B cell (primary cell): ENCODE measurements at regions of chrX and their contacts with region 1.

Region 1: DNA sequence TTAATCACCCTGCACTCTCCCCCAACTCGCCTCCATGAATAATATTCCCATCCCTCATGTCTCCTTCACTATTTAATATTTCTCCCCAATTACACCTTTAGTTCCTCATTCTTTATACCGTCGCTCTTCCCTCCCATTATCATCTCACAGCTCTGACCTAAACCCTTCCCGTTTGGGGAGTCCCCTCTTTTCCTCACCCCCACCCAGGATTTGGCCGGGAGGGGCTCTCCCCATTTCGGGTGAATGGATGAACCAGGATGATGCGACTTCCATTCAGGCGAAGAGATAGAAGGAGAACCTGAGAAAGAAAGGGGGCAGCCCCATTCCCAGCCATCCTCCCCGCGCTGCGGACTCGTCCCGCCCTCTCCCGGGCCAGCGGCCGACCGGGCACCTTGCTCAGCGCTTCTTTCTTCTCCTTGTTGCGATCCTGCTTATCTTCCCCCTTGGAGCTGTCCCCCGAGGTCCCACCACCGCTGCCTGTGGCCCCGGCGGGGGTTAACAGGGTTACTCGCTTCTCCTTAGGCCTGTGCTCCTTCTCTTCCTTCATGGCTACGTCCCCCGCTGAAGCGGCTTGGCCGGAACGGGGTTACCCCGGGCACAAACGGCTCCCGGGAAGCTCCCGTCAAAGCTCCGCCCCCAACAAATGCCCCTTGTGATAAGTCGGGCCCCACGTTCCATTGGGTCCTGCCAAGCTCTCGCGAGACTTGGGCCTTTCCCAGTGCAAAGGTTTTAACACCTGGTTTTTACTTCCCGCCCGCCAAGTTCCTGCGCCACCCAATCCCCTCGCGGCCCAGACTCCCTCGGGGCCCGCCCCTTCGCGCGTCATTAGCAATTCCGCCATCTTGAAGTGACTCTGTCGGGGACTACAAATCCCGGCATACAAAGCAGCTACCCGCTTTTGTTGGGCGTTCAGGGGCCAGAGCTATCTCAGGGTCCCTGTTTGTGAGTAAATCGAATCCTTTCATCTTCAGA is at the start of gene UPF3B:
- DNase-seq: peak; percentile 95
- ATAC-seq: peak; percentile 96
- H3K4me3 ChIP-seq: peak within 1 kb of the TSS; percentile 69 to 93 (median 84)
- H3K4me3 Mint-ChIP-seq: peak within 1 kb of the TSS; percentile 98
- H3K27ac ChIP-seq: peak within 1 kb of the TSS; percentile 92 to 93
- H3K27ac Mint-ChIP-seq: peak within 1 kb of the TSS; percentile 97
- H3K4me1 ChIP-seq: peaks cover 0 to 11% of the 10 kb centered on the region in 2 donors
- H3K4me1 Mint-ChIP-seq: peaks cover 15% of the 10 kb centered on the region
- H3K27me3 ChIP-seq: no peaks in the 10 kb centered on the region
- H3K27me3 Mint-ChIP-seq: no peaks in the 10 kb centered on the region
- CTCF ChIP-seq: no peak
- total RNA-seq, gene UPF3B: 20.4 and 22.1 TPM in 2 replicates

Region 2: GRCh38 chrX:119826399-119826959 is 26.2 kb before region 1 on chrX:
- CTCF ChIA-PET with region 1: no interaction called
- POLR2A ChIA-PET with region 1: no interaction called
- intact Hi-C with region 1: loop called (anchors 2 kb)
- DNase-seq: no peak
- ATAC-seq: no peak
- H3K4me3 ChIP-seq: no peak overlapping the region
- H3K4me3 Mint-ChIP-seq: no peak overlapping the region
- H3K27ac ChIP-seq: no peak overlapping the region
- H3K27ac Mint-ChIP-seq: no peak overlapping the region
- H3K4me1 ChIP-seq: peaks cover 6 to 9% of the 10 kb centered on the region in 2 donors
- H3K4me1 Mint-ChIP-seq: peaks cover 11% of the 10 kb centered on the region
- H3K27me3 ChIP-seq: no peaks in the 10 kb centered on the region
- H3K27me3 Mint-ChIP-seq: no peaks in the 10 kb centered on the region
- CTCF ChIP-seq: no peak

Region 3: DNA sequence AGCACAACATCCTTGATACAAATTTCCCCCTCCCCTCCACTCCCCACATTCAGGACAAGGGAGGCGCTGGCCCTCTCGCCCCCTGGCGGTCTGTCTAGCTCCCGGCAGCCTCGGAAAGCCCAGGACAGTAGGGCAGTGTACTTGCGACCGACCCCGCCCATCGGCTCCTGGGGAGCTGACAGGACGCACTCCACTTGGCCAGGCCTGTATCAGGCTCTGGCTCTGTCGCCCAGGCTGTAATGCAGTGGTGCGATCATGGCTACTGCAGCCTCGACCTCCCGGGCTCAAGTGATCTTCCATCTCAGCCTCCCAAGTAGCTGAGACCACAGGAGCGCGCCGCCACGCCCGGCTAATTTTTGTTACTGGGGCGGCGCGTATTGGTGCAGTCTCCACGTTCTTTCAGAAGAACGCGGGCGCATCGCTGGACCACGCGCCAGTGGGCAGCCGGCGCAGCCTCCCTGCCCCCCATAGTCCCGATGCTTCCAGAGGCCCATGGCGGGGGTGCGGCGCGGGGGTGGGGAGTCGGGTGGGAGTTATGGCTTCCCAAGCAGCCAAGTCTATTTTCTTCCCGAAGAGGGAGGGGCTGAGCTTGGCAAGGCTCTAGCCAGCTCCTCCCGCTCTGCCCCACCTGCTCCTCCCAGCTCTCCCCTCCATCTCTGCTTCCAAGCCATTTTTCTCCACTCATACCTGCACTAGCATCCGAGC is 35.2 kb after region 1 on chrX:
- CTCF ChIA-PET with region 1: no interaction called
- POLR2A ChIA-PET with region 1: no interaction called
- intact Hi-C with region 1: loop called (anchors 5 kb)
- DNase-seq: peak; percentile 66
- ATAC-seq: peak; percentile 86
- H3K4me3 ChIP-seq: peak overlapping the region in 4 of 5 experiments; percentile 27 to 50 (median 40)
- H3K4me3 Mint-ChIP-seq: peak overlapping the region; percentile 71
- H3K27ac ChIP-seq: no peak overlapping the region
- H3K27ac Mint-ChIP-seq: no peak overlapping the region
- H3K4me1 ChIP-seq: peaks cover 5 to 9% of the 10 kb centered on the region in 2 donors
- H3K4me1 Mint-ChIP-seq: peaks cover 9% of the 10 kb centered on the region
- H3K27me3 ChIP-seq: no peaks in the 10 kb centered on the region
- H3K27me3 Mint-ChIP-seq: no peaks in the 10 kb centered on the region
- CTCF ChIP-seq: peak; percentile 53

Region 4: DNA sequence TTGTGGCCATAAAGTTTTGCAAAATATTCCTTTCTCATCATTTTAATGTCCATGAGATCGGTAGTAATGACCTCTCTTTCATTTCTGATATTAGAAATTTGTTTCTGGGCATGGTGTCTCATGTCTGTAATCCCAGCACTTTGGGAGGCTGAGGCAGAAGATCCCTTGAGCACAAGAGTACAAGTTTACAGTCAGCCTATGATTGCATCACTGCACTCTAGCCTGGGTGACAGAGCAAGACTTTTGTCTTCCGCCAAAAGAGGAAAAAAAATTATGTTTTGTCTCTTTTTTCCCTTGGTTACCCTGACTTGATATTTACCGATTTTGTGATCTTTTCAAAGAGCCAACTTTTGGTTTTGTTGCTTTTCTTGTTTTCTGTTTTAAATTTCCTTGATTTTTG is 101.7 kb after region 1 on chrX:
- CTCF ChIA-PET with region 1: no interaction called
- POLR2A ChIA-PET with region 1: no interaction called
- intact Hi-C with region 1: no loop called
- DNase-seq: no peak
- ATAC-seq: no peak
- H3K4me3 ChIP-seq: no peak overlapping the region
- H3K4me3 Mint-ChIP-seq: no peak overlapping the region
- H3K27ac ChIP-seq: no peak overlapping the region
- H3K27ac Mint-ChIP-seq: no peak overlapping the region
- H3K4me1 ChIP-seq: no peaks in the 10 kb centered on the region
- H3K4me1 Mint-ChIP-seq: no peaks in the 10 kb centered on the region
- H3K27me3 ChIP-seq: peaks cover 0 to 3% (median 1%) of the 10 kb centered on the region in 4 experiments
- H3K27me3 Mint-ChIP-seq: peaks cover 29% of the 10 kb centered on the region
- CTCF ChIP-seq: no peak

Region 5: DNA sequence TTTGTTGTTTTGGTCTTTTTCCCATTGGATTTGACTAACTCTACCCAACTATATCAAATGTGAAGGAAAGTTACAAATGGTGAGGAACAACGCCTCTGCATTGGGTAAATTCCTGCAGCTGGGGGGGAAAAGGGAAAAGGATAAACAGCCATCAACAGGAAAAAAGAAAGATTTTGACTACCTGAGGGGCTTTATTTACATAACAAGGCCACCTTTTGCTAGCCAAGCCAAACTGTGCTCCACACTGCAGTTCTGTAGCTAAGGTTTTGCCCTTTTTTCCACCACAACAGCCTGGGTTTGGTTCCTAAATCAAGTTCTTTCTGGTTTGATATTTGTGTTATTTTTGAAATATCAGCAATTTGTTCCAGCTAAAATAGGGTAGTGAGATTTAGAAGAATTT is 184.0 kb after region 1 on chrX:
- CTCF ChIA-PET with region 1: no interaction called
- POLR2A ChIA-PET with region 1: no interaction called
- intact Hi-C with region 1: no loop called
- DNase-seq: no peak
- ATAC-seq: no peak
- H3K4me3 ChIP-seq: peak overlapping the region in 1 of 5 experiments; percentile 56
- H3K4me3 Mint-ChIP-seq: no peak overlapping the region
- H3K27ac ChIP-seq: no peak overlapping the region
- H3K27ac Mint-ChIP-seq: no peak overlapping the region
- H3K4me1 ChIP-seq: peaks cover 18 to 37% of the 10 kb centered on the region in 2 donors
- H3K4me1 Mint-ChIP-seq: peaks cover 22% of the 10 kb centered on the region
- H3K27me3 ChIP-seq: no peaks in the 10 kb centered on the region
- H3K27me3 Mint-ChIP-seq: no peaks in the 10 kb centered on the region
- CTCF ChIP-seq: no peak